SK-N-SH (cell line): ENCODE measurements at regions of chr9 and their contacts with region 1.

Region 1: DNA sequence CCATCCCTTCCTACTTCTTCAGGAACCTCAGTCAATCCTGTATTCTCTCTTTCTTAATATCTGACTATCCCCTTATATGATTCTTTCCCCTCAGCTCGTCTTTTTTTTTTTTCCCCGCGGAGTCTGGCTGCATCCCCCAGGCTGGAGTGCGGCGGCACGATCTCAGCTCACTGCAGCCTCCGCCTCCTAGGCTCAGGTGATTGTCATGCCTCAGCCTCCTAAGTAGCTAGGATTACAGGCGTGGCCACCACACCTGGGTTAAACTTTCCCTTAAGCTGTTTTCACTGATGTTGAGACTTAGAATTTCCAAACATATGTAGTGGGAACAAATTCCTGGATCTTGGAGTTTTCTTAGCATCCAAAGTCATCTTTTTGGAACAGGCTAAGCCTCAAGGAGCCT is 13.3 kb upstream of the RUSC2 start:
- DNase-seq: no peak
- H3K4me3 ChIP-seq: no peak overlapping the region
- H3K27ac ChIP-seq: no peak overlapping the region
- H3K4me1 ChIP-seq: no peaks in the 10 kb centered on the region
- H3K27me3 ChIP-seq: no peaks in the 10 kb centered on the region
- CTCF ChIP-seq: no peak
- EP300 ChIP-seq: no peak
- RAD21 ChIP-seq: no peak

Region 2: GRCh38 chr9:35111001-35111933 is 365.3 kb before region 1 on chr9:
- CTCF ChIA-PET with region 1: interaction called, 48 read pairs
- POLR2A ChIA-PET with region 1: no interaction called
- DNase-seq: peak; percentile 96
- H3K4me3 ChIP-seq: peak overlapping the region; percentile 92 to 95
- H3K27ac ChIP-seq: peak overlapping the region; percentile 75 to 97
- H3K4me1 ChIP-seq: peaks cover 35 to 42% of the 10 kb centered on the region in 2 experiments
- H3K27me3 ChIP-seq: no peaks in the 10 kb centered on the region
- CTCF ChIP-seq: no peak
- EP300 ChIP-seq: no peak
- RAD21 ChIP-seq: no peak

Region 3: GRCh38 chr9:35258676-35259474 is 217.7 kb before region 1 on chr9:
- CTCF ChIA-PET with region 1: interaction called, 13 read pairs
- POLR2A ChIA-PET with region 1: no interaction called
- DNase-seq: peak; percentile 42
- H3K4me3 ChIP-seq: no peak overlapping the region
- H3K27ac ChIP-seq: no peak overlapping the region
- H3K4me1 ChIP-seq: no peaks in the 10 kb centered on the region
- H3K27me3 ChIP-seq: no peaks in the 10 kb centered on the region
- CTCF ChIP-seq: peak; percentile 72
- EP300 ChIP-seq: no peak
- RAD21 ChIP-seq: peak; percentile 83